Activated CD8-positive, alpha-beta T cell treated with anti-CD3 and anti-CD28 coated beads for 36 hours (primary cell): ENCODE measurements at regions of chr10 and their contacts with region 1.

Region 1: GRCh38 chr10:26437637-26438461 is at the start of gene APBB1IP:
- DNase-seq: peak; percentile 67
- ATAC-seq: peak; percentile 71
- H3K4me3 Mint-ChIP-seq: peak within 1 kb of the TSS; percentile 95
- H3K27ac Mint-ChIP-seq: peak within 1 kb of the TSS; percentile 94
- H3K4me1 Mint-ChIP-seq: peaks cover 46% of the 10 kb centered on the region
- H3K27me3 Mint-ChIP-seq: no peaks in the 10 kb centered on the region
- CTCF ChIP-seq: no peak
- total RNA-seq, gene APBB1IP: 61.9 to 64.8 TPM

Region 2: DNA sequence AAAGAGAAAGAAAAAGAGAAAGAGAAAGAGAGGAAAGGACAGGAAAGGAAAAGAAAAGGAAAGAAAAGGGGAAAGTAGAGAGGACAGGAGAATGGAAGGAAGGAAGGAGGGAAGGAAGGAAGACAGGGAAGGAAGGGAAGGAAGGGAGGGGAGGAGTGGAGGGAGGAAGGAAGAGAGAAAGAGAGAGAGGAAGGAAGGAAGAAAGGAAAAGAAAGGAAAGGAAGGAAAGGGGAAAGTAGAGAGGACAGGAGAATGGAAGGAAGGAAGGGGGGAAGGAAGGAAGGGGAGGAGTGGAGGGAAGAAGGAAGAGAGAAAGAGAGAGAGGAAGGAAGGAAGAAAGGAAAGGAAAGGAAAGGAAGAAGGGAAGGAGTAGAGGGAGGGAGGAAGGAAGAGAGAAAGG is 96.1 kb before region 1 on chr10:
- CTCF ChIA-PET with region 1: no interaction called
- POLR2A ChIA-PET with region 1: interaction called, 3 read pairs
- intact Hi-C with region 1: loop called (anchors 5 kb)
- DNase-seq: no peak
- ATAC-seq: no peak
- H3K4me3 Mint-ChIP-seq: no peak overlapping the region
- H3K27ac Mint-ChIP-seq: no peak overlapping the region
- H3K4me1 Mint-ChIP-seq: peaks cover 6% of the 10 kb centered on the region
- H3K27me3 Mint-ChIP-seq: no peaks in the 10 kb centered on the region
- CTCF ChIP-seq: no peak

Region 3: GRCh38 chr10:26486991-26487850 is 49.4 kb after region 1 on chr10:
- CTCF ChIA-PET with region 1: interaction called, 3 read pairs
- POLR2A ChIA-PET with region 1: interaction called, 4 read pairs
- intact Hi-C with region 1: loop called (anchors 2 kb)
- DNase-seq: peak; percentile 90
- ATAC-seq: peak; percentile 83
- H3K4me3 Mint-ChIP-seq: peak overlapping the region; percentile 64
- H3K27ac Mint-ChIP-seq: peak overlapping the region; percentile 96
- H3K4me1 Mint-ChIP-seq: peaks cover 74% of the 10 kb centered on the region
- H3K27me3 Mint-ChIP-seq: no peaks in the 10 kb centered on the region
- CTCF ChIP-seq: no peak